Endothelial cell of umbilical vein (primary cell): ENCODE measurements at regions of chr6 and their contacts with region 1.

Region 1: DNA sequence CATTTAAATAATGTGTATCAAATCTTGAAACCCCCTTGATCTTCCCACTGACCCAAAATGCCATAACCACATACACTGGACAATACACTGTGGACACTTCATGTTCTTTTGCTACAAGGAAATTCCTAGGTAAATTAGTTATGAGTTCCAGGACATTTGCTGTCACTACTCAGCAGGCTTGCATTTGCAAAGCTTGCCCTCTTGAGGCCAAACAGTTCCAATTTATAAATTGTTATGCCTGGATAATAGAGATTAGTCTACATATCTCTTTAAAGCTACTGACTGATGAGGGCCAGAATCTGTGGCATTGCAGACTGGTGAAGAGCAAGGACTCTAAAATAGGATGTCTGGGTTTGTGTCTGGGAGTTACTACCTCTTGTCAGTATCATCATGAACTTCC is 17.4 kb upstream of the RAB32 start:
- DNase-seq: peak; percentile 19
- H3K4me3 ChIP-seq: no peak overlapping the region
- H3K27ac ChIP-seq: no peak overlapping the region
- H3K4me1 ChIP-seq: no peaks in the 10 kb centered on the region
- H3K27me3 ChIP-seq: no peaks in the 10 kb centered on the region
- CTCF ChIP-seq: peak in 1 of 2 donors; percentile 15
- POLR2A ChIP-seq: no peak

Region 2: GRCh38 chr6:146047371-146047770 is 478.8 kb before region 1 on chr6:
- CTCF ChIA-PET with region 1: interaction called, 22 read pairs
- POLR2A ChIA-PET with region 1: no interaction called
- dilution Hi-C with region 1: no loop called
- intact Hi-C with region 1: loop called (anchors 5 kb)
- DNase-seq: no peak
- H3K4me3 ChIP-seq: no peak overlapping the region
- H3K27ac ChIP-seq: no peak overlapping the region
- H3K4me1 ChIP-seq: peaks cover 3% of the 10 kb centered on the region
- H3K27me3 ChIP-seq: no peaks in the 10 kb centered on the region
- CTCF ChIP-seq: no peak
- POLR2A ChIP-seq: no peak

Region 3: DNA sequence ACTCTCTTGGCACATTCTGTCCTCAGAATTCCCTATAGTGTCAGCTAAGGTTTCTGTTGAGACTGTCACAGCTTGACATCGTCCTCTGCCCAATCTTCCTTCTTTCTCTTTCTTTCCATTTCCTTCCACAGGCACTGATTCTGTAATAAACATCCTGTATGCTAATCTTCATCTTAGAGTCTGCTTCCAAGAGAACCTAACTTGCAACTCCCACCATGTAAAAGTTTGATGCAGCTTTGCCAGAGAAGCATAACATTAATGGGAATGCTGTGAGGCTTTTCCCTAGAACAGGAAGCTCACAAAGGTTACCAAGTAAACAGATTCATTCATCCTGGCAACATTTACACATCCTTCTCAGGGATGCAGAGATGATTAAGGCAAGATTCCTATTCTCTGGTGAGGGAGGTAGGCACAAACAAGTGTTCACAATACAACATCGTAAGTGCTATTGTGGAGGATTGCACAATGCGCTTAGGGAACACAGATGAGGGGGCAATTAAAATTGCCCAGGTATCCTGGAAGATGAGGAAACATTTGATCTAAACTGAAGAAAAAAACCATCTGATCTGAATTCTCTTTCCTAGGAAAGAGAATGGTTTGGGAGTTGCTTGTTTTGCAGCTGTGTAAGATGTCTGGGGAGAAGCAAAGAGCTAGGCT is 422.6 kb before region 1 on chr6:
- CTCF ChIA-PET with region 1: no interaction called
- POLR2A ChIA-PET with region 1: no interaction called
- dilution Hi-C with region 1: no loop called
- intact Hi-C with region 1: no loop called
- DNase-seq: no peak
- H3K4me3 ChIP-seq: no peak overlapping the region
- H3K27ac ChIP-seq: no peak overlapping the region
- H3K4me1 ChIP-seq: no peaks in the 10 kb centered on the region
- H3K27me3 ChIP-seq: no peaks in the 10 kb centered on the region
- CTCF ChIP-seq: no peak
- POLR2A ChIP-seq: no peak